Natural killer cell (primary cell): ENCODE measurements at regions of chr4 and their contacts with region 1.

Region 1: DNA sequence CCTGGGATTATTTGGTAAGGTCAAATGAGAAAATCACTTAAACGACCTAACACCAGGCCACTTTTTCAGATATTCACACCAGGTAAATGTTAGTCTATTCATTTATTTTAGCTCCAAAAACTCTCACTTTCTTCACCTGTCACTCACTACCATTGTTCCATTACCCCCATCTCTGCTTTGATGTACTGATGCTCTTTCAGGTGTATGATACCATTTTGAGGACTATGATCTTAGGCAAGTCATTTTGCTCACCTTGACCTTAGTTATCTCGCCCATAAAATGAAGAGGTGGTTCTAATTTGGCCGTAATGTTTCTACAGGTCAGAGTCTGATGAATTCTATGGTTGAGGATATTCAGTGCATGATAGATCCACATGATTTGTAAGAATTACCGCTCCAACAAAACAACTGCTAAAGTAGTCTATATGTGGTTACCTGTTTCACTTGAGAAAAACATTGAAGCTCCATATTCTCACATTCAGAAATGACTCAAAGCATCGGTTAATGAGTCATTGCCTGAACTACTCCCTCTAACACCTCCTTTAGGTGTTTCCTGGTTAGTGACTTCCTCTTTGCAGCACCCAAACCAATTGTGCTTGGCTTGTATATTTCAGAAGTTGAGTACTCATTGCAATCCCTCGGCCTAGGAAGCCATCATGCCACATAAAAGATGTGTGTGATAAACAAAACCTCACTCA is 4.5 kb downstream of the DTHD1 start:
- DNase-seq: peak; percentile 39 to 87
- ATAC-seq: peak; percentile 72 to 87 (median 84)
- H3K4me3 ChIP-seq: peak overlapping the region; percentile 34
- H3K4me3 Mint-ChIP-seq: peak overlapping the region; percentile 98
- H3K27ac ChIP-seq: peak overlapping the region; percentile 98
- H3K27ac Mint-ChIP-seq: peak overlapping the region; percentile 98
- H3K4me1 ChIP-seq: peaks cover 11% of the 10 kb centered on the region
- H3K4me1 Mint-ChIP-seq: peaks cover 88 to 94% of the 10 kb centered on the region in 2 donors
- H3K27me3 ChIP-seq: no peaks in the 10 kb centered on the region
- H3K27me3 Mint-ChIP-seq: no peaks in the 10 kb centered on the region
- CTCF ChIP-seq: no peak

Region 2: GRCh38 chr4:36054750-36055467 is 231.0 kb before region 1 on chr4:
- intact Hi-C with region 1: no loop called
- DNase-seq: no peak
- ATAC-seq: no peak
- H3K4me3 ChIP-seq: no peak overlapping the region
- H3K4me3 Mint-ChIP-seq: no peak overlapping the region
- H3K27ac ChIP-seq: no peak overlapping the region
- H3K27ac Mint-ChIP-seq: no peak overlapping the region
- H3K4me1 ChIP-seq: no peaks in the 10 kb centered on the region
- H3K4me1 Mint-ChIP-seq: no peaks in the 10 kb centered on the region
- H3K27me3 ChIP-seq: no peaks in the 10 kb centered on the region
- H3K27me3 Mint-ChIP-seq: no peaks in the 10 kb centered on the region
- CTCF ChIP-seq: no peak

Region 3: GRCh38 chr4:36192922-36193321 is 93.0 kb before region 1 on chr4:
- intact Hi-C with region 1: loop called (anchors 2 kb)
- DNase-seq: peak in 1 of 2 donors; percentile 28
- ATAC-seq: peak; percentile 52 to 76 (median 73)
- H3K4me3 ChIP-seq: no peak overlapping the region
- H3K4me3 Mint-ChIP-seq: peak overlapping the region; percentile 76
- H3K27ac ChIP-seq: peak overlapping the region; percentile 61
- H3K27ac Mint-ChIP-seq: peak overlapping the region; percentile 79 to 81
- H3K4me1 ChIP-seq: peaks cover 29% of the 10 kb centered on the region
- H3K4me1 Mint-ChIP-seq: peaks cover 70 to 75% of the 10 kb centered on the region in 2 donors
- H3K27me3 ChIP-seq: no peaks in the 10 kb centered on the region
- H3K27me3 Mint-ChIP-seq: no peaks in the 10 kb centered on the region
- CTCF ChIP-seq: no peak

Region 4: GRCh38 chr4:36255577-36255976 is 30.4 kb before region 1 on chr4:
- intact Hi-C with region 1: loop called (anchors 1 kb)
- DNase-seq: peak; percentile 52 to 92
- ATAC-seq: peak; percentile 77 to 91 (median 90)
- H3K4me3 ChIP-seq: no peak overlapping the region
- H3K4me3 Mint-ChIP-seq: peak overlapping the region; percentile 87
- H3K27ac ChIP-seq: peak overlapping the region; percentile 74
- H3K27ac Mint-ChIP-seq: peak overlapping the region; percentile 83 to 94
- H3K4me1 ChIP-seq: peaks cover 23% of the 10 kb centered on the region
- H3K4me1 Mint-ChIP-seq: peaks cover 53 to 63% of the 10 kb centered on the region in 2 donors
- H3K27me3 ChIP-seq: no peaks in the 10 kb centered on the region
- H3K27me3 Mint-ChIP-seq: no peaks in the 10 kb centered on the region
- CTCF ChIP-seq: no peak

Region 5: GRCh38 chr4:36269101-36269500 is 16.8 kb before region 1 on chr4:
- intact Hi-C with region 1: loop called (anchors 1 kb)
- DNase-seq: peak; percentile 35 to 87
- ATAC-seq: peak; percentile 94 to 99 (median 97)
- H3K4me3 ChIP-seq: no peak overlapping the region
- H3K4me3 Mint-ChIP-seq: peak overlapping the region; percentile 54
- H3K27ac ChIP-seq: peak overlapping the region; percentile 87
- H3K27ac Mint-ChIP-seq: peak overlapping the region; percentile 94 to 95
- H3K4me1 ChIP-seq: peaks cover 2% of the 10 kb centered on the region
- H3K4me1 Mint-ChIP-seq: peaks cover 32 to 34% of the 10 kb centered on the region in 2 donors
- H3K27me3 ChIP-seq: no peaks in the 10 kb centered on the region
- H3K27me3 Mint-ChIP-seq: no peaks in the 10 kb centered on the region
- CTCF ChIP-seq: no peak

Region 6: DNA sequence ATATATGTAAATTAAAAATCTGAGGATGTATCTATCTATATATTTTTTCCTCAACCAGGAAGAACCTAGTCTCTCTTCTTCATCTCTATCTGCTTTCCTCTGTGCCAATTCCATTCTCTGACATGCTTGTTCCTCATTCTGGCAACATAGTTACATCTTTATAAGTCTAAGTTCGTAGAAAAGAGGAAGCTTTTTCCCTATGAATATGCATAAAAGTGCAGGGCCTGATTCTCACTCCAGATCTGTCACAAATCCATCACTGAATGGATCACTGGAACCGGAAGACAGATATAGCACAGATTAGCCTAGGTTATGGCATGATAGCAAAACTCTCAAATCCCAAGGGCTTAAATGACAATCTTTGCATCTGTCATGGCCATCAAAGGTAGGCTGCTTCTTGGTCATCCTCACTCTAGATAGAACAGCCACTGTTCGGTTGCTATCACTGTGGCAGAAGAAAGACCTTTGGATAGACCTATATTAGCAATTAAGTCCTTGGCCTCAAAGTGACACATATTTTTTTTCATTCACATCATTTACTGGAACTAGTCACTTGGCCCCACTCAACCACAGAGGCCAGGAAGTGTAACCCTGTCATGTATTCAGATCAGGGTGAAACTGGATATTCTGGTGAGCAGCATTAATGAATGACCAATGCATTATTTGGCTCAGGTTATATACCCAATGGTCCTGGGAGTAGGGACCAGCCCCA is 17.6 kb after region 1 on chr4:
- intact Hi-C with region 1: no loop called
- DNase-seq: no peak
- ATAC-seq: peak; percentile 52 to 65 (median 65)
- H3K4me3 ChIP-seq: no peak overlapping the region
- H3K4me3 Mint-ChIP-seq: no peak overlapping the region
- H3K27ac ChIP-seq: no peak overlapping the region
- H3K27ac Mint-ChIP-seq: peak overlapping the region; percentile 48 to 75
- H3K4me1 ChIP-seq: peaks cover 7% of the 10 kb centered on the region
- H3K4me1 Mint-ChIP-seq: peaks cover 28 to 48% of the 10 kb centered on the region in 2 donors
- H3K27me3 ChIP-seq: no peaks in the 10 kb centered on the region
- H3K27me3 Mint-ChIP-seq: no peaks in the 10 kb centered on the region
- CTCF ChIP-seq: no peak

Region 7: GRCh38 chr4:36322921-36323354 is 37.0 kb after region 1 on chr4:
- intact Hi-C with region 1: loop called (anchors 1 kb)
- DNase-seq: peak in 1 of 2 donors; percentile 88
- ATAC-seq: peak; percentile 77 to 86 (median 83)
- H3K4me3 ChIP-seq: no peak overlapping the region
- H3K4me3 Mint-ChIP-seq: peak overlapping the region; percentile 67
- H3K27ac ChIP-seq: peak overlapping the region; percentile 58
- H3K27ac Mint-ChIP-seq: peak overlapping the region; percentile 17 to 39
- H3K4me1 ChIP-seq: peaks cover 22% of the 10 kb centered on the region
- H3K4me1 Mint-ChIP-seq: peaks cover 68 to 71% of the 10 kb centered on the region in 2 donors
- H3K27me3 ChIP-seq: no peaks in the 10 kb centered on the region
- H3K27me3 Mint-ChIP-seq: no peaks in the 10 kb centered on the region
- CTCF ChIP-seq: no peak

Region 8: DNA sequence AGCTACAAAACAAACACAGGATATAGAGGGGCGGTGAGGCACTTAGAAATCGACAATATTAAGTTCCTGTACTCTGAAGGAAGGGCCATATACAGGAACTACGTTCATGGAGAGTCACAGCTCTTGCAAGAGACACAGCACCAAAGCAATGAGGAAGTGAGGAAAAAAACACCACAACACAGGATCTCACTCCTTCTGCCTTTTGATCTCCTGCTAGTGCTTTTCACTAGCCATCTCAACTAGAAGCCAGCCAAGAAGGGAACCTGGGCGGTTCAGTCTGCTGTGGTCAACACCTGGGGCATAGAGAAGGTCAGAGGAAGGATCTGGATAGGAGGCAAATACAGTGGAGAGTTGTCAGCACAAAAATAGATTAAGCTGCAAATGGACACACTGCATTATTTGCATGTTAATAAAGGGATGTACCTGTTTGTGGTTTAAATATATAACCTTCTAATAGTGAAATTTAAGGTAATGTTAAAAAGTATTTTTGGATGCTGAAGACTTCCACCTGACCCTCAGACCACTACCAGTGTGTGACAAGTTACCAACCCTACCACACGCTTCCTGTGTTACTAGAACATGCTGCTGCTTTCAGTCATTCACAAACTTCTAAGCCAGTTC is 100.1 kb after region 1 on chr4:
- intact Hi-C with region 1: loop called (anchors 5 kb)
- DNase-seq: peak; percentile 43 to 85
- ATAC-seq: peak; percentile 88 to 96 (median 91)
- H3K4me3 ChIP-seq: no peak overlapping the region
- H3K4me3 Mint-ChIP-seq: peak overlapping the region; percentile 38
- H3K27ac ChIP-seq: peak overlapping the region; percentile 24
- H3K27ac Mint-ChIP-seq: peak overlapping the region; percentile 47 to 73
- H3K4me1 ChIP-seq: peaks cover 10% of the 10 kb centered on the region
- H3K4me1 Mint-ChIP-seq: peaks cover 18 to 19% of the 10 kb centered on the region in 2 donors
- H3K27me3 ChIP-seq: peaks cover 33% of the 10 kb centered on the region
- H3K27me3 Mint-ChIP-seq: peaks cover 42 to 58% of the 10 kb centered on the region in 2 donors
- CTCF ChIP-seq: no peak